ENCODE measurements at regions of chr5 and their contacts with region 1.

Region 1: GRCh38 chr5:179821581-179822432 is 1.1 kb downstream of the SQSTM1 start:
- DNase-seq: peak; percentile 91
- H3K4me3 Mint-ChIP-seq: peak overlapping the region; percentile 93
- H3K27ac Mint-ChIP-seq: peak overlapping the region; percentile 97
- H3K4me1 Mint-ChIP-seq: peaks cover 52% of the 10 kb centered on the region
- H3K27me3 Mint-ChIP-seq: no peaks in the 10 kb centered on the region

Region 2: GRCh38 chr5:179836225-179837019 is 14.6 kb after region 1 on chr5:
- CTCF ChIA-PET with region 1: no interaction called
- POLR2A ChIA-PET with region 1: interaction called, 21 read pairs
- DNase-seq: peak; percentile 70
- H3K4me3 Mint-ChIP-seq: peak overlapping the region; percentile 26
- H3K27ac Mint-ChIP-seq: peak overlapping the region; percentile 85
- H3K4me1 Mint-ChIP-seq: peaks cover 26% of the 10 kb centered on the region
- H3K27me3 Mint-ChIP-seq: no peaks in the 10 kb centered on the region

Region 3: DNA sequence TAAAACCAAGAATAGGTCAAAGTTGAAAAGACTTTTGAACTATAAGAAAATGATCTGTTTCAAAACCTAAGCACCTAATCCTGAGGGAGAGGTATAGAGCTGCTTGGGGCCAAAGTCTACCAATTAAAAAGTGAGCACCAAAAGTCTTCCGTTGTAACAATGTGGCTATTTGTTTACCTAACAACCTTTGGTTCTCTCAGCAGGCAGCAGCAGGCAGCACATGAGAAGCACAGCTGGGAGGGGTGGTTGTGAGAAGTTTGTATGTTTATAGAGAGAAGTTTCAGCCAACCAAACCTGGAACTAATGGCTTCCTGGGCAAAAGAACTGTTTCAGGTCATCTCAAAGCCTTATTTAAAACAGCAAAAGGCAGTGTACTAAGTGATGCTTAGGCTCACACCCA is 145.7 kb after region 1 on chr5:
- CTCF ChIA-PET with region 1: no interaction called
- POLR2A ChIA-PET with region 1: no interaction called
- DNase-seq: no peak
- H3K4me3 Mint-ChIP-seq: no peak overlapping the region
- H3K27ac Mint-ChIP-seq: no peak overlapping the region
- H3K4me1 Mint-ChIP-seq: no peaks in the 10 kb centered on the region
- H3K27me3 Mint-ChIP-seq: no peaks in the 10 kb centered on the region